CD8-positive, alpha-beta T cell (primary cell): ENCODE measurements at regions of chr12 and their contacts with region 1.

Region 1: DNA sequence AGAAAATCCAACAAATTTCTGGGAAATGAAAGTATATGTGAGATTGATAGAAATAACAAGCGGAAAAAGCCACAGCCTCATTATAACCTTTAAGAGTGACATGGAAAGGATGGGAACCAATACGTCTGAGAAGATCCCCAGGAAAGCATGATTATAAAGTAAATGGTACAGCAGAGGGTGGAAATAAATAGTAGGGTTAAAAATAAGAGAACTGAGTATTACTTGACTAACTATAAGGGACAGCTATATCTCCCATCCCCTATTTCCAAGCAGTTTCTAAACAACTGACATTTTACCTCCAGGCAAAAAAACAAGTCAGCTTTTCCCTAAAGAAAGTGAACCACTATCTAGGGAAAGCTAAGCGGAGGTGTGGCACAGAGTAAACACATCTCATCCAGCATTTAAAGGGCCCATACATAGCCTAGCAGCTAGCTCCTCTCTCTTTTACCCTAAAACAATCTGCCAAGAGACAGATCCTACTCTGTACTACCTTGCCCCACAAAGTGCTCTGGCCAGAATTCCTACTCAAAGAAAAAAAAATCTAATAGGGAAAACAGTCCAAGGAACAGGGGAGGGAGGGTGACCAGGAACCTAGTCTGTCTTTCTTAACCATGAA is 11.2 kb downstream of the OSBPL8 start:
- DNase-seq: no peak
- ATAC-seq: no peak
- H3K4me3 ChIP-seq: no peak overlapping the region
- H3K4me3 Mint-ChIP-seq: no peak overlapping the region
- H3K27ac ChIP-seq: no peak overlapping the region
- H3K27ac Mint-ChIP-seq: no peak overlapping the region
- H3K4me1 ChIP-seq: peaks cover 69% of the 10 kb centered on the region
- H3K4me1 Mint-ChIP-seq: peaks cover 89% of the 10 kb centered on the region
- H3K27me3 ChIP-seq: no peaks in the 10 kb centered on the region
- H3K27me3 Mint-ChIP-seq: no peaks in the 10 kb centered on the region
- CTCF ChIP-seq: no peak

Region 2: DNA sequence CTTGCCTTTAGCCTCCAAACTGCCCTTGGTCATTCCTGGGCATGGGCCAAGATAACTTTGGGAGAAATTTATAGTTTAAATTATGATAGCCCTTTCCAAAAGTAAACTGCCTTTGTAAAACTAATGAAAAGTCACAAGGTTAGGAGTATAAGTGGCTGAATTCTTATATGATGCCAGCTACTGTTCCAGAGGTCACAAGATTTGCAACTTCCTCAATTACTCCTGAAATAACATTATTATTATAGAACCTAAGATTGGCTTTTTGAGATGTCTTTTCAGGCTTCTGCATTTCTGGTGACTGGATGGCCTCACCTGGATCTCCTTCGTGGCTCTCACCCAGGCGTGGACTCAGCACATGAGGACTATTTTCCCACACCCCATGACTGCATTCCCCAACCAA is 43.7 kb before region 1 on chr12:
- CTCF ChIA-PET with region 1: no interaction called
- POLR2A ChIA-PET with region 1: no interaction called
- intact Hi-C with region 1: loop called in 1 of 2 experiments (anchors 5 kb)
- DNase-seq: no peak
- ATAC-seq: no peak
- H3K4me3 ChIP-seq: no peak overlapping the region
- H3K4me3 Mint-ChIP-seq: no peak overlapping the region
- H3K27ac ChIP-seq: no peak overlapping the region
- H3K27ac Mint-ChIP-seq: no peak overlapping the region
- H3K4me1 ChIP-seq: no peaks in the 10 kb centered on the region
- H3K4me1 Mint-ChIP-seq: peaks cover 43% of the 10 kb centered on the region
- H3K27me3 ChIP-seq: no peaks in the 10 kb centered on the region
- H3K27me3 Mint-ChIP-seq: no peaks in the 10 kb centered on the region
- CTCF ChIP-seq: no peak